Brain microvascular endothelial cell (primary cell): ENCODE measurements at regions of chr6 and their contacts with region 1.

Region 1: GRCh38 chr6:106560996-106561685 is 68.2 kb downstream of the RTN4IP1 start:
- DNase-seq: peak; percentile 24
- H3K4me3 ChIP-seq: no peak overlapping the region
- H3K27ac ChIP-seq: no peak overlapping the region
- H3K27me3 ChIP-seq: no peaks in the 10 kb centered on the region
- CTCF ChIP-seq: no peak

Region 2: DNA sequence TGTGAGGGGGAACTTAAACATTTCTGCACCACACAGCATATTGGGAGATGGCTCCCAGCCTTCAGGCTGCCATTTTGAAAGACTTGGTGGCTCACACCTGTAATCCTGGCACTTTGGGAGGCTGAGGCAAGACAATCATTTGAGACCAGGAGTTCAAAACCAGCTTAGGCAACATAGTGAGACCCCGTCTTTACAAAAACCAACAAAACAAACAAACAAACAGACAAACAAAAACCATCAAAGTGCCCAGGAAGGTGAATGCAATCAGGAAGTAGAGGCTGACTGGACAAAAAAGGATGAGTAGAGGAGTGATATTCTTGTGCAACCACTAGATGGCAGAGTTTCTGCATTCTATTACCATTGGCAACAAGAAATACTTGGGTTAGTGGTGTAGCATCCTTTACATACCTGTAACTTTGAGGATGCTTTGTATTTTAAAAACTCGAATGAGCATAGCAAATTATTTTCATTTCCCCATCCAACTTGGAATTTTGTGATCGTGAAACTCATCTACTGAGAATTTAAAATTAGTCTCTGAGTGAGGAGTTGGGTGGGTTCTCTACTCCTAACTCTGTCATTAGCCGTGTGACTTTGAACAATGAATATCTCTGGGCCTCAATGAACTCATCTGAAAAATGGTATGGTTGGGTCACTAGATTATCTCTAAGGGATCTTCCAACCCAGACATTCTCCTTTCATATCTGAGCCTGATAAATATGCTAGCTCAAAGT is 116.2 kb before region 1 on chr6:
- in situ Hi-C with region 1: loop called (anchors 10 kb)
- DNase-seq: peak; percentile 47
- H3K4me3 ChIP-seq: no peak overlapping the region
- H3K27ac ChIP-seq: no peak overlapping the region
- H3K27me3 ChIP-seq: peaks cover 22% of the 10 kb centered on the region
- CTCF ChIP-seq: peak; percentile 64